Calu3 (cell line): ENCODE measurements at regions of chr2 and their contacts with region 1.

Region 1: GRCh38 chr2:140863713-140864112 is 1267.1 kb downstream of the LRP1B start:
- DNase-seq: peak; percentile 6
- H3K4me3 Mint-ChIP-seq: no peak overlapping the region
- H3K27ac Mint-ChIP-seq: peak overlapping the region; percentile 42
- H3K4me1 Mint-ChIP-seq: peaks cover 9% of the 10 kb centered on the region
- H3K27me3 Mint-ChIP-seq: no peaks in the 10 kb centered on the region
- CTCF ChIP-seq: peak; percentile 36

Region 2: DNA sequence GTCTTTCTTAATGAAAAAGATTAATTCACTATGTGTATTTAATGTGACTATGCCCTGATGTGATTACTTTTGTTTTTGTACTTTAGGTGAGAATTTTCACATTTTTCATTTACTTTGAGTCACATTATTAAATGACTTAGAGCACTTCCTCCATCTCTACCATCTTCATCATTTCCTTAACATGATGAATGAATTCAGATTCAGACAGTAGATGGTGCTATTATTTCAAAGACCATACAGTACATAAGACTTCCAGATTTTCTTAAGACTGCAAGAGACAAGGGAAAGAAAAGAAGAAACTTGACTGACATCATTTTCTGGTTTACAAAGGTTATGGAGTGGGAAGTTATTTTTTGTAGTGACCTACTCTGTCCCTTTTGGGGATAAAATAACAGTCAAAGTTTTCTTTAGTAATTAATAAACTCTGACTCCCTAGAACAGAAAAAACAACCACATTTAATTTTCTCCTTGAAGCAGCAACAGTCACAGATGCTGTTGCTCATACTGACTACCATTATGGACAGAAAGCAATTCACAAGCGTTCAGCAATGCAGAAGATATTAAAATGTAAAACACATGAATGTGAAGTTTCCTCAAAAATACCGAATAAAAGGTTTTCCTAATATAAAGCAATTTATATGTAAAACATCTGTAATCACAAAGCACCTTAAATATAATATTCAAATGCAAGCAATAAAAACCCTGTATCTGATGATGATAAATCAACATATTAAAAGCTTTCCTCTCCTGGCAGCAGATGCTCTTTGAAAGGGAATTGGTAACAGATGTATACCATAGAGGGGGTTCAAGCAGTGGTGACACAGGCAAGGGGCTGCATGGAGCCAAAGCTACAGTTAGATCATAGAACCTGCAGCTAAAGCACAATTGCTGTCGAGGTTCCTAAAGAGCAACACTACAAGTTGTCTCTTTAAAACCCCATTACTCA is 1072.6 kb before region 1 on chr2:
- CTCF ChIA-PET with region 1: no interaction called
- intact Hi-C with region 1: loop called (anchors 2 kb)
- DNase-seq: no peak
- H3K4me3 Mint-ChIP-seq: no peak overlapping the region
- H3K27ac Mint-ChIP-seq: no peak overlapping the region
- H3K4me1 Mint-ChIP-seq: no peaks in the 10 kb centered on the region
- H3K27me3 Mint-ChIP-seq: no peaks in the 10 kb centered on the region
- CTCF ChIP-seq: no peak

Region 3: DNA sequence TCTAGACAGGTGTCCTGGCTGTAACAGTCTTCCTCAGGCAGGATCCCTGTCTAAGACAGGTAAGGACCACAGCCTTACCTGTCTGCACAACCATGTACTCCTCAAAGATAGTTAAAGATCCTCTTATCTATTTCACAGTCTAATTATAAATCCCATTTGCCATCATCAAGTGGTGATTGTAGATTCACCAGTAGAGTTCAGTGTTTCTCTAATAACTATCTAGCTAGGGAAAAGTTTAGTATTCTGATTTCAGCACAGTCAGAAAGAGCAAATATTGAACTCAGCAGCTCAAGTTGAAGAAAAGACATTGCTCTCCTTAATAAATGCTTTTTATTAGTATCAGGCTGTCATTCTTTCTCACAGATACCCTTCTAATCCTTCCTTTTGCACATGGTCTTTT is 778.0 kb before region 1 on chr2:
- CTCF ChIA-PET with region 1: interaction called, 5 read pairs
- intact Hi-C with region 1: loop called (anchors 5 kb)
- DNase-seq: no peak
- H3K4me3 Mint-ChIP-seq: no peak overlapping the region
- H3K27ac Mint-ChIP-seq: no peak overlapping the region
- H3K4me1 Mint-ChIP-seq: no peaks in the 10 kb centered on the region
- H3K27me3 Mint-ChIP-seq: no peaks in the 10 kb centered on the region
- CTCF ChIP-seq: no peak

Region 4: GRCh38 chr2:140526575-140526974 is 337.1 kb before region 1 on chr2:
- CTCF ChIA-PET with region 1: no interaction called
- intact Hi-C with region 1: loop called (anchors 10 kb)
- DNase-seq: peak; percentile 23
- H3K4me3 Mint-ChIP-seq: no peak overlapping the region
- H3K27ac Mint-ChIP-seq: no peak overlapping the region
- H3K4me1 Mint-ChIP-seq: peaks cover 22% of the 10 kb centered on the region
- H3K27me3 Mint-ChIP-seq: no peaks in the 10 kb centered on the region
- CTCF ChIP-seq: no peak

Region 5: GRCh38 chr2:140586379-140586778 is 277.3 kb before region 1 on chr2:
- CTCF ChIA-PET with region 1: interaction called, 3 read pairs
- intact Hi-C with region 1: loop called (anchors 5 kb)
- DNase-seq: peak; percentile 45
- H3K4me3 Mint-ChIP-seq: no peak overlapping the region
- H3K27ac Mint-ChIP-seq: no peak overlapping the region
- H3K4me1 Mint-ChIP-seq: peaks cover 18% of the 10 kb centered on the region
- H3K27me3 Mint-ChIP-seq: no peaks in the 10 kb centered on the region
- CTCF ChIP-seq: peak; percentile 46

Region 6: DNA sequence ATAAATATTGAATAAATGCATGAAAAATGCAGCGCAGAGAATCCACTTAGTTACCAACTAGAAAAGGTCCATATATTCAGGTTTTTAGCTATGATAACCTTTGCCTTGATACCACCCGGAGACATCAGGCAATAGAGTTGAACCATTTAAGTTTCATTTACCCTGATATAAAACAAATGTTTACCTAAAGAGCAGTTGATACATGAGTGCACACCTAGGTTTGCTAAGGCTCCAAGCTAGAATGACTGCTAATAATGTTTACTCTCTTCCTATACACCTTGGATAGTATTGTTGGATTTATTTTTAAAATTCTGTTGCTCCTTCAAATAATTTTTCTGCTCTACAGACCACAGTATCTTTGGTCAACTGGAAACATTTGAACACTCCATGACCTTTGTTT is 196.5 kb before region 1 on chr2:
- CTCF ChIA-PET with region 1: no interaction called
- intact Hi-C with region 1: no loop called
- DNase-seq: no peak
- H3K4me3 Mint-ChIP-seq: no peak overlapping the region
- H3K27ac Mint-ChIP-seq: no peak overlapping the region
- H3K4me1 Mint-ChIP-seq: no peaks in the 10 kb centered on the region
- H3K27me3 Mint-ChIP-seq: no peaks in the 10 kb centered on the region
- CTCF ChIP-seq: no peak

Region 7: GRCh38 chr2:140695163-140695562 is 168.6 kb before region 1 on chr2:
- CTCF ChIA-PET with region 1: no interaction called
- intact Hi-C with region 1: loop called (anchors 5 kb)
- DNase-seq: peak; percentile 24
- H3K4me3 Mint-ChIP-seq: peak overlapping the region; percentile 22
- H3K27ac Mint-ChIP-seq: peak overlapping the region; percentile 96
- H3K4me1 Mint-ChIP-seq: peaks cover 10% of the 10 kb centered on the region
- H3K27me3 Mint-ChIP-seq: no peaks in the 10 kb centered on the region
- CTCF ChIP-seq: no peak

Region 8: DNA sequence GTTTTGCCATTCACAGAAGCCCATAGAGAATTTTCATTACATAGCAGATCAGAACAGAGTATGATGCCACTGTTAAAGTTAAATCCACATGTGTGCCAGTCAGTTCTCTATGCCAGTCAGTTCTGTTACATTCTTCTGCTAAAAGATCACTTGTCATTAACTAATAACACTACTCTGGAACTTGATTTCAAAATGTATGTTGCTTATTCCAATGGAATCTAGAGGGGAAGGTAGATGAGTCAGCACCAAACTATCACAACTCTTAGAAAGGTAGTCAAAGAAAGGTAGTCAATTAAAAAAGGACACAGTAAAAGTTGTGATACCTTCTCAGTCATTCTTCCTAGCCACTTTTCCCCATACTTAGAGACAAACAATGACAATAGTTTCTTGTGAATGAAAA is 52.7 kb after region 1 on chr2:
- CTCF ChIA-PET with region 1: no interaction called
- intact Hi-C with region 1: no loop called
- DNase-seq: no peak
- H3K4me3 Mint-ChIP-seq: no peak overlapping the region
- H3K27ac Mint-ChIP-seq: no peak overlapping the region
- H3K4me1 Mint-ChIP-seq: peaks cover 11% of the 10 kb centered on the region
- H3K27me3 Mint-ChIP-seq: no peaks in the 10 kb centered on the region
- CTCF ChIP-seq: no peak